Aorta (tissue), 5 donors: ENCODE measurements at regions of chr19 and their contacts with region 1.

Region 1: DNA sequence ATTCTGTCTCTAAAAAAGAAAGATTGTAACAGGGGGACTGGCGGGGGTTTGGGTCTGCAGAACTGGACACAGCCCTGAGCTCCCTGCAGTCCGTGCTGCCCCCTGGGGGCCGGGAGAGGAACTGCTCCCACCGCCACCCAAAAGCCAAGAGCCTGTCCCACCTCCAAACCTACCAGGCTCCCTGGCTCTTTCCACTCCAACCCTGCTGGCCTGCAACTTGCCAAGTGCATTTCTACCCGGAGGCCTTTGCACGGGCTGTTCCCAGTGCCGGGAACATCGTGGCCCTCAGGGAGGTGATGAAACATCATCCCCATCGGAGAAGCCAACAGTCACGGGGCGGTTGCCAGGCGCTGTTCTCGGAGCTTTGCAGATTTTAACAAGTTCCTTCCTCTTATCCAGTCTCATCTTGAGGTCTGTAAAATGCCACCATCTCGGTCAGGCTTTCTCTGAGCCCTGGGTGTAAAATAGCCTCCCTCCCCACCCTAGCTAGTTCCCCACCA is 50.7 kb downstream of the SMIM24 start:
- DNase-seq: peak; percentile 95 to 96
- ATAC-seq: peak; percentile 90
- H3K4me3 ChIP-seq: no peak overlapping the region
- H3K27ac ChIP-seq: peak overlapping the region in 1 of 2 donors; percentile 71
- H3K4me1 ChIP-seq: no peaks in the 10 kb centered on the region
- H3K27me3 ChIP-seq: no peaks in the 10 kb centered on the region

Region 2: GRCh38 chr19:3324321-3324856 is 105.2 kb before region 1 on chr19:
- intact Hi-C with region 1: loop called in 1 of 2 experiments (anchors 2 kb)
- DNase-seq: peak; percentile 61 to 91
- ATAC-seq: peak; percentile 62
- H3K4me3 ChIP-seq: no peak overlapping the region
- H3K27ac ChIP-seq: no peak overlapping the region
- H3K4me1 ChIP-seq: no peaks in the 10 kb centered on the region
- H3K27me3 ChIP-seq: no peaks in the 10 kb centered on the region

Region 3: GRCh38 chr19:3375221-3376090 is 54.2 kb before region 1 on chr19:
- intact Hi-C with region 1: no loop called
- DNase-seq: peak; percentile 92 to 96
- ATAC-seq: peak; percentile 92
- H3K4me3 ChIP-seq: no peak overlapping the region
- H3K27ac ChIP-seq: peak overlapping the region; percentile 19 to 83
- H3K4me1 ChIP-seq: no peaks in the 10 kb centered on the region
- H3K27me3 ChIP-seq: no peaks in the 10 kb centered on the region

Region 4: GRCh38 chr19:3403489-3404323 is 25.9 kb before region 1 on chr19:
- intact Hi-C with region 1: loop called in 1 of 2 experiments (anchors 2 kb)
- DNase-seq: peak; percentile 93 to 97
- ATAC-seq: peak; percentile 87
- H3K4me3 ChIP-seq: peak overlapping the region in 1 of 2 donors; percentile 6
- H3K27ac ChIP-seq: peak overlapping the region; percentile 53 to 78
- H3K4me1 ChIP-seq: peaks cover 0 to 2% of the 10 kb centered on the region in 2 donors
- H3K27me3 ChIP-seq: no peaks in the 10 kb centered on the region